IMR-90 (cell line): ENCODE measurements at regions of chr20 and their contacts with region 1.

Region 1: DNA sequence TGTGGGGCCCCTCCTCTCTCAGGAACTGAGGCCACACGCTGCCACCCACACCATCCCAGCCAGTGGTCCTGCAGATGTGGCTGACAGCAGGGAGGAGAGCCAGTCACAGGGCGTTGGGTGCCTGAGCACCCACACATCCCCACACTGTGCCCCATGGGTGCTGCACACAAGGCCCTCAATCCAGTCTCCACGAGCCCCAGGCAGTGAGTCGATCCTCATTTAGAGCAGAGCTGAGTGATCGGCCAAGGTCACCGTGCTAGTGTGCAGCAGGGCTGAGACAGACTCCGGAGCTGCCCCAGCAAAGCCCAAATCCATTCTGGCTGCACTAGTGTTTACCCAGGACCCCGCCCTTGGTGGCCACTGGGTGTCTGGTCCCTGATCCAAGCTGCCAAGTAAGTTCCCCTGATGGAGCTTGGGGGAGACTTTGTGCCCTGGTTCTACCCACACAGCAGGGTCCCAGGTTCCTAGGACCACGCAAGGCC is 9.0 kb downstream of the C20orf203 start:
- DNase-seq: no peak
- ATAC-seq: peak; percentile 13; the same call in 1 of the 2 replicates
- H3K4me3 ChIP-seq: no peak overlapping the region
- H3K27ac ChIP-seq: no peak overlapping the region
- H3K4me1 ChIP-seq: no peaks in the 10 kb centered on the region
- H3K27me3 ChIP-seq: no peaks in the 10 kb centered on the region; the same call in 1 of the 2 replicates
- CTCF ChIP-seq: no peak
- POLR2A ChIP-seq: no peak
- RAD21 ChIP-seq: no peak

Region 2: GRCh38 chr20:31918466-31919105 is 746.1 kb before region 1 on chr20:
- CTCF ChIA-PET with region 1: no interaction called
- POLR2A ChIA-PET with region 1: no interaction called
- dilution Hi-C with region 1: no loop called
- in situ Hi-C with region 1: no loop called
- intact Hi-C with region 1: loop called (anchors 5 kb)
- DNase-seq: peak; percentile 10
- ATAC-seq: peak; percentile 44; the same call in 1 of the 2 replicates
- H3K4me3 ChIP-seq: no peak overlapping the region
- H3K27ac ChIP-seq: no peak overlapping the region
- H3K4me1 ChIP-seq: no peaks in the 10 kb centered on the region
- H3K27me3 ChIP-seq: peaks cover 45% of the 10 kb centered on the region
- CTCF ChIP-seq: no peak
- POLR2A ChIP-seq: no peak
- RAD21 ChIP-seq: no peak

Region 3: DNA sequence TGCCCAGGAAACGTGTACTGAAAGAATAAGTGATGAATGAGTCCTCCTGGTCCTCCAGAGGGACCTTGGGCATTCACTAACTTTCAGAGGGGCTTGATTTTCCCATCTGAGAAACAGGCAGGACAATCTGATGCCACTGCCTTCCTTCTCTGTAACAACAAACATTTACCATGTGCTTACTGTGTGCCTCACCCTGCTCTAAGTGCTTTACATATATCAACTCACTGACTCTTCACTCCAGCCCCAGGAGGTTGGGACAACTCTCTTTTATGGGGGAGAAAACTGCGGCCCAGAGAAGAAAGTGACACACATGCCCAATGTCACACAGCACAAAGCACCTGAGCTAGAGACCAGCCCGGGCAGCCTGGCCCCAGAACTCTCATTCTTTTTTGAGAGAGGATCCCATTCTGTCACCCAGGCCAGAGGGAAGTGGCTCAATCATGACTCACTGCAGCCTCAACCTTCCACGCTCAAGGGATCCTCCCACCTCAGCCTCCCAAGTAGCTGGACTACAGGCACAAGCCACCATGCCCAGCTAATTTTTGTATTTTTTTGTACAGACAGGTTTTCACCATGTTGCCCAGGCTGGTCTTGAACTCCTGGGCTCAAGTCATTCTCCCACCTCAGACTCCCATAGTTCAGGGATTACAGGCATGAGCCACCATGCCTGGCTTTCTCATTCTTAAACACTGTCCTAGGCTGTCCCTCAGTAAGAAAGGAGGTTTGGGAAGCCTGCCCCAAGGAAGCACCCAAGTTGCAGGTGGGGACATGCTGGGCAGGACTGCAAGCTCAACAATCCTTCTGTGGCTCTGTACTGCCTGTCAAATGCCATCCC is 117.6 kb before region 1 on chr20:
- CTCF ChIA-PET with region 1: no interaction called
- POLR2A ChIA-PET with region 1: no interaction called
- dilution Hi-C with region 1: no loop called
- in situ Hi-C with region 1: no loop called
- intact Hi-C with region 1: no loop called
- DNase-seq: no peak
- ATAC-seq: no peak
- H3K4me3 ChIP-seq: no peak overlapping the region
- H3K27ac ChIP-seq: no peak overlapping the region
- H3K4me1 ChIP-seq: no peaks in the 10 kb centered on the region
- H3K27me3 ChIP-seq: peaks cover 7% of the 10 kb centered on the region; the same call in 1 of the 2 replicates
- CTCF ChIP-seq: no peak
- POLR2A ChIP-seq: no peak
- RAD21 ChIP-seq: no peak

Region 4: DNA sequence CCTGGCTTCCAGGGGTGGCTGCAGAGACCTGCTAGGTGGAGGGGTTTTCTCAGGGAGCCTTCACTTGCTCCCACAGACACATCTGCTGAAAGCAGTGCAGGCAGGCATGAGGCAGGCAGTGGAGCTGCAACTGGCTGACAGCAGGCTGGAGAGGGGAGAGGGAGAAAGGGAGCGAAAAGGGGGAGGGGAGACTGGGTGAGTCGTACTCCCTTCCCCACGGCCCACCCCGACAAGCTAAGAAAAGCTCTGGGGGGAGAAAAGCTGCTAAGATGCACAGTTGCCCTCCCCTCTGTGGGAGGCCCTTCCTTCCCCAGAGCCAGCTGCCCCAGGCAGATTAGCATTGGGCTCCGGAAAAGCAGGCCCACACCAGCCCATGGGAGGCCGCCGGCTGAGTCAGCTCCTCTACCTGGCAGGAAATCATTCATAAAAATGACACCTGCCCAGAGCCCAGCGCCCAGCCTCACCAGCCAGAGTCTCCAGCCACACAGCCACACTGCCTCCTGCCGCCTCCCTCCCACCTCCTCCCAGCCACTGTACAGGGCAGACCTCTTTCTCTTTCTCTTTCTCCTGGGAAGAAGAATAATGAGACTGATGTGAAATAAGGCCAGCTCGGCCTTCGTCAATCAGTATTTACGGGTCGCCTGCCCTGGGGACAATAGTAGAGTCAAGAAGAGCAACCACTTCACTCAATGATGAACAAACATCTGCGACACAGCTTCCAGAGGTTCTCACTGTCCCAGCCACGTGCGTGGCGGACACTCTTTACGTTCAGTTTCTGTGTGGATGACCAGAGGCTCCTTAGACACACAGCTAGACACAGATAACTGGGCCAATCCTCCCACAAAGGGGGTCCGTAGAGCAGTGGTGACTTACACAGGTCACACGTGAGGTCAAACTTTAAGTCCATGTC is 16.7 kb after region 1 on chr20:
- CTCF ChIA-PET with region 1: no interaction called
- POLR2A ChIA-PET with region 1: no interaction called
- dilution Hi-C with region 1: no loop called
- in situ Hi-C with region 1: no loop called
- intact Hi-C with region 1: no loop called
- DNase-seq: peak; percentile 17
- ATAC-seq: peak; percentile 55; the same call in 1 of the 2 replicates
- H3K4me3 ChIP-seq: no peak overlapping the region
- H3K27ac ChIP-seq: no peak overlapping the region
- H3K4me1 ChIP-seq: peaks cover 7% of the 10 kb centered on the region
- H3K27me3 ChIP-seq: no peaks in the 10 kb centered on the region
- CTCF ChIP-seq: no peak
- POLR2A ChIP-seq: no peak
- RAD21 ChIP-seq: no peak

Region 5: GRCh38 chr20:33005132-33005566 is 340.4 kb after region 1 on chr20:
- CTCF ChIA-PET with region 1: no interaction called
- POLR2A ChIA-PET with region 1: no interaction called
- dilution Hi-C with region 1: no loop called
- in situ Hi-C with region 1: no loop called
- intact Hi-C with region 1: no loop called
- DNase-seq: peak; percentile 15
- ATAC-seq: no peak
- H3K4me3 ChIP-seq: no peak overlapping the region
- H3K27ac ChIP-seq: no peak overlapping the region
- H3K4me1 ChIP-seq: no peaks in the 10 kb centered on the region
- H3K27me3 ChIP-seq: peaks cover 3% of the 10 kb centered on the region
- CTCF ChIP-seq: peak; percentile 36; the same call in 1 of the 2 replicates
- POLR2A ChIP-seq: no peak
- RAD21 ChIP-seq: peak; percentile 22; the same call in 1 of the 2 replicates

Region 6: DNA sequence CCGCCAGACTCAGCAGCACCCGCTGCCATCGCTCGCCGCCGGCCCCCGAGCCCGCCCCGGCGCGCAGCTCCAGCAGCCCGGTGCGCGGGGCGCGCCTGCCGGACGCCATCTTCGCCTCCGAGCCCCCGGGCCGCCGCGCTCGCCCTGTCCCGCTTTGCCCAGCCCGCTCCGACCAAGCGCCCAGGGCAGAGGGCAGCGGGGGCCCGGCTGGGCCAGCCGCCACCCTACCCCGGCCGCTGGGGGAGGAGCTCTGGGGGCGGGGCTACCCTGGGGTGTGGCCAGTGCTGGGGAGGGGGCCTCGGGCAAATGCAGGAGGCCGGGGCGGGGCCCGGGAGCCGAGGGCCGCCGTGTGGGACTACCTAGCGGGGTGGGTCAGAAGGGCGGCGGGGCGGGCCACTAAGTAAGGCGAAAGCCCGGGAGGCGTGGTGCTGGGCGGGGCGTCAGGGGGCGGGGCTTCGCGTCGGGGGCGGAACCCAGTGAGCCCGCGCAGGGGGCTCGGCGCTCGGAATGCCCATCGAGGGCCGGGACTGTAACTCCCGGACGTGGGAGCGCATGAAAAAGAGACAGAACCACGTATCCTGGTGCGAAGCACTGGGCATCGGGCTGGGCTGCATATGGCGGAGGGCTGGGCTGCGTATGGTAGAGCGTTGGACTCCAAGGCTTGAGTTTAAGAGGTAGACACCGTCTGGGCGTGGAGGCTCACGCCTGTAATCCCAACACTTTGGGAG is 779.0 kb after region 1 on chr20 and contains the start of gene SNTA1:
- CTCF ChIA-PET with region 1: no interaction called
- POLR2A ChIA-PET with region 1: no interaction called
- dilution Hi-C with region 1: no loop called
- in situ Hi-C with region 1: no loop called
- intact Hi-C with region 1: no loop called
- DNase-seq: peak; percentile 49
- ATAC-seq: peak; percentile 92
- H3K4me3 ChIP-seq: peak within 1 kb of the TSS; percentile 93
- H3K27ac ChIP-seq: peak within 1 kb of the TSS; percentile 41
- H3K4me1 ChIP-seq: peaks cover 4% of the 10 kb centered on the region; the same call in 1 of the 2 replicates
- H3K27me3 ChIP-seq: no peaks in the 10 kb centered on the region
- CTCF ChIP-seq: no peak
- POLR2A ChIP-seq: no peak
- RAD21 ChIP-seq: no peak
- total RNA-seq, gene SNTA1: 13.3 and 15.4 TPM in 2 replicates